HCT116 (cell line): ENCODE measurements at regions of chr11 and their contacts with region 1.

Region 1: GRCh38 chr11:16613512-16614381 is 124.7 kb upstream of the C11orf58 start:
- DNase-seq: peak; percentile 61
- ATAC-seq: peak; percentile 99
- H3K4me3 ChIP-seq: peak overlapping the region; percentile 23 to 45
- H3K27ac ChIP-seq: no peak overlapping the region
- H3K4me1 ChIP-seq: peaks cover 0 to 14% of the 10 kb centered on the region in 2 experiments; a peak in 2 of 4 replicates
- H3K27me3 ChIP-seq: peaks cover 44% of the 10 kb centered on the region
- CTCF ChIP-seq: peak; percentile 62 to 88 (median 88)
- POLR2A ChIP-seq: no peak
- RAD21 ChIP-seq: peak; percentile 88

Region 2: DNA sequence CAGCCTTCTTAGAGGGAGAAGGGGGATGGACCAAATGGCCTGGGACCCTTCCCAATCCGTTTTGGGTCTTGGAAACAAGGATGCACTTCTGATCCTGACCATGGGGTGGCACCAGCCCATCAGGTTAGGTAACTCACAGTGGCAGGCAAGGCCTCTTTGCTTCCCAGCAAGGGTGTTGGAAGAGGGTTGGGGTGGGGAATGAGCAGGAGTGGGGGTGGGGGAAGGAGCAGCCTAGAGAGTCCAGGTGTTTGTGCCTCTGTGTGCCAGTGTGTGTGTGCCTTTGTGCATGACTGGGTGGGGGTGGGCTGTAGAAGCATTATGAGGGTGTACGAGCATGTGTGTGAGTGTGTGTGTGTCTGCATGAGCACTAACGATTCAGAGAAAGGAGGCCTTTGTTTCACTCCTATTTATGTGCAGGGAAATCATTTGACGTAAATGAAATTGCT is 1285.9 kb before region 1 on chr11:
- CTCF ChIA-PET with region 1: interaction called, 10 read pairs
- POLR2A ChIA-PET with region 1: no interaction called
- RAD21 ChIA-PET with region 1: no interaction called
- intact Hi-C with region 1: loop called (anchors 2 kb)
- DNase-seq: peak; percentile 35
- ATAC-seq: peak; percentile 88
- H3K4me3 ChIP-seq: no peak overlapping the region
- H3K27ac ChIP-seq: no peak overlapping the region
- H3K4me1 ChIP-seq: no peaks in the 10 kb centered on the region
- H3K27me3 ChIP-seq: peaks cover 6% of the 10 kb centered on the region; the same call in 1 of the 2 replicates
- CTCF ChIP-seq: peak; percentile 34 to 72 (median 66); a peak in 4 of 6 replicates
- POLR2A ChIP-seq: no peak
- RAD21 ChIP-seq: peak; percentile 68

Region 3: GRCh38 chr11:15650105-15650938 is 963.4 kb before region 1 on chr11:
- CTCF ChIA-PET with region 1: interaction called, 8 read pairs
- POLR2A ChIA-PET with region 1: no interaction called
- RAD21 ChIA-PET with region 1: no interaction called
- intact Hi-C with region 1: loop called (anchors 2 kb)
- DNase-seq: peak; percentile 70
- ATAC-seq: peak; percentile 95
- H3K4me3 ChIP-seq: no peak overlapping the region
- H3K27ac ChIP-seq: no peak overlapping the region; the same call in 1 of the 2 replicates
- H3K4me1 ChIP-seq: peaks cover 5 to 11% of the 10 kb centered on the region in 2 experiments; a peak in 3 of 4 replicates
- H3K27me3 ChIP-seq: peaks cover 7% of the 10 kb centered on the region; the same call in 1 of the 2 replicates
- CTCF ChIP-seq: peak; percentile 75 to 90 (median 82)
- POLR2A ChIP-seq: no peak
- RAD21 ChIP-seq: peak; percentile 90

Region 4: DNA sequence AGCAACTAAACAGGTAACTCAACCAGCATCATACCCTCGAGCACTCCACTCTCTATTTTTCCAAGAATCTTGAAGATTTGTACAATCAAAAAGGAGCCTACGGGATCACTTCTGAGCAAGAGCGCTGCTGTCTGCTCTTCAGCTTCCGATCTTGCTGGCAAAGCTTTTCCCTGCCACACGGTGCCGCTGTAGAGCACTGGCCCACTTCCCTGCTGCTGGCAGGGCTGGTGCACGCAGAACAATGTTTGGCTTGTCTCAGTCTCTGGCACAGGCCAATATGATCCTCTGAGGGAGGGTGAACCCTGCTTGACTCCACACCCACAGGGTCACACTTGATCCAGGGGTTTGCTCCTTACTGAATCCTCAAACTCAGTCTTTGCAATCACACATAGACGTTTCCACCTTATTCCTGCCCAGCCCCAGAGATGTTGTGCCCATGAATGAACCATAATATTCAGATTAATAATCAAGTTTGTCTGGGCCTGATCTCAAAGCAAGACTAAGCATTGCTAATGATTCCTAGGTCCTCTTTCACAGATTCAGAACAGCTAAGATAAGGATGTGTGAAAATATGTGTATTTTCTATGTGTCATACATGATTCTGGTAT is 794.0 kb before region 1 on chr11:
- CTCF ChIA-PET with region 1: interaction called, 10 read pairs
- POLR2A ChIA-PET with region 1: no interaction called
- RAD21 ChIA-PET with region 1: no interaction called
- intact Hi-C with region 1: loop called (anchors 10 kb)
- DNase-seq: peak; percentile 29
- ATAC-seq: peak; percentile 97
- H3K4me3 ChIP-seq: no peak overlapping the region
- H3K27ac ChIP-seq: no peak overlapping the region
- H3K4me1 ChIP-seq: no peaks in the 10 kb centered on the region
- H3K27me3 ChIP-seq: no peaks in the 10 kb centered on the region; the same call in 1 of the 2 replicates
- CTCF ChIP-seq: peak; percentile 43 to 96 (median 88); a peak in 5 of 6 replicates
- POLR2A ChIP-seq: no peak
- RAD21 ChIP-seq: peak; percentile 60

Region 5: DNA sequence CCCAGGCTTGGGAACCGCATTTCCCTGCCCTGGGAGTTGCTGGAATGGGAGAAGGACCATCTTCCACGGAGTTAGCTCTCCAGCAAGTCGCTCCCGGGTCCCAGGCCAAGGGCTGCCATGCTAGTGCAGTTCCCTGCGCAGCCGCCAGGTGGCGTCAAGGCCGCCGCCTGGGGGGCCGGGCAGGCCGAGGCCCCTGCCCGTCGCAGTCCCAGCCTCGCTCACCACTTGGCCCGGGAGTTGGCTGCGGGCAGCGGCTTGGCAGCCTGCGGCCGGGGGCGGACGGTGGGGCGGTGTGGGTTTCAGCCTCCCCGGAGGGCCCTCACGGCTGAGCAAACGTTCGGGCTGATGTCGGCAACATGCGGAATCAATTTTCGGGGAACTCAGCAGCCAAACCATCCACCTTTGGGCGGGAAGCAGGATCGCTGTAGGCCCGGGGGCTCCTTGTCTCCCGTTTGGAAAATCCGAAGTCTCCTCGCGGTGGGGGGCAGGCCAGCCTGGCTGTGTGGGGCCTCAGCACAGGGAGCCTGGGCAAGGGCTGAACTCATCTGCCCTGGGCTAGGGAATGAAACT is 672.5 kb before region 1 on chr11:
- CTCF ChIA-PET with region 1: interaction called, 14 read pairs
- POLR2A ChIA-PET with region 1: no interaction called
- RAD21 ChIA-PET with region 1: no interaction called
- intact Hi-C with region 1: loop called (anchors 1 kb)
- DNase-seq: no peak
- ATAC-seq: peak; percentile 95
- H3K4me3 ChIP-seq: no peak overlapping the region
- H3K27ac ChIP-seq: no peak overlapping the region
- H3K4me1 ChIP-seq: no peaks in the 10 kb centered on the region
- H3K27me3 ChIP-seq: no peaks in the 10 kb centered on the region
- CTCF ChIP-seq: peak; percentile 37 to 98 (median 94); a peak in 4 of 6 replicates
- POLR2A ChIP-seq: no peak
- RAD21 ChIP-seq: peak; percentile 58